HepG2 (cell line): ENCODE measurements at regions of chr2 and their contacts with region 1.

Region 1: DNA sequence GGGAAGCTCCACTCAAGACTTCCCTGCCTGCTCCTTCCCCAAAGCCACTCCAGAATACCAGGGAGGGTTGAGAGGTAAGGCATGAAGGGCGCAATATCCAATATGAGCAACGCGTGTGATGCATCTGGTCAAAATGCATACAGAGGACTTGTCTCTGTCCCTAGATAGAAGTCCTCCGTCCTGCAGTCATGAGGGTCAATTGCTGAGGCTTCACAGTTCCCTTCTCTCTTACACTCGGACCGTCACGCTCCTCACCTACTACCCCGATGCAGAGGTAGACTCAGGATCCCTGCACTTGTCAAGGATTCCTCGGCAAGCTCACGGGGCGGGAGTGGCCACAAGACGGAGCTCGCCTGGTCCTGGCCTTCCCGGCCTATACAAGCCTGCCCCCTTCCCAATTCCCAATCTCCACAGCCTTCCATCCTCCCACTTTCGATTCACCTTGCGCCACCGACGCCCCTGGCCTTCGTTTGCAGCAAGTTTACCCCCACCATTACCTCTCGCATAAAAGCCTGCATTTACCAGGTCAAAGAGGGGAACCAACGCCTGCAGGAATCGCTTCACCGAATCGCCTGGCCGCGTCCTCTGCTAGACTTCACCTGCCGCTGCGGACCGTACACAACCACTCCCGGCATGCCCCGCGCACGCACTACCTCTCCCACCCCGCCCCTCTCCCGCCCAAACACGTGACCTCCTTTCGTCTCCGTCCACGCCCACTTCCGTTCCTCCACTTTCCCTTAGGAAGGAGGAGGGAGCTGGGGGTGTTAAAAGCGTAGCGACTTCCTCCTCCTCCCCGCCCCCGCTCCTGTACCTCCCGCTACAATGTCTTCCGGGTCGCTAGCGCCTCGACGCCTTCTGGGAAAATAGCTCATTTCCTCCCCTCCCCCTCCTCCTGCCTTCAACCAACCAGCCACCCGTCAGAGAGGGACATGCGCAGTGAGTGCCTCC is at the start of gene ORC4:
- DNase-seq: peak; percentile 100
- ATAC-seq: peak; percentile 89
- H3K4me3 ChIP-seq: peak within 1 kb of the TSS; percentile 88 to 97 (median 93)
- H3K27ac ChIP-seq: peak within 1 kb of the TSS; percentile 82
- H3K4me1 ChIP-seq: peaks cover 57% of the 10 kb centered on the region
- H3K27me3 ChIP-seq: peaks cover 0 to 6% of the 10 kb centered on the region in 2 experiments; a peak in 1 of 5 replicates
- CTCF ChIP-seq: peak; percentile 89
- EP300 ChIP-seq: peak in 1 of 2 experiments; percentile 64; a peak in 1 of 4 replicates
- POLR2A ChIP-seq: peak; percentile 94 to 99
- RAD21 ChIP-seq: peak; percentile 79; the same call in 1 of the 2 replicates
- total RNA-seq, gene ORC4: 84.8 and 135 TPM in 2 replicates

Region 2: DNA sequence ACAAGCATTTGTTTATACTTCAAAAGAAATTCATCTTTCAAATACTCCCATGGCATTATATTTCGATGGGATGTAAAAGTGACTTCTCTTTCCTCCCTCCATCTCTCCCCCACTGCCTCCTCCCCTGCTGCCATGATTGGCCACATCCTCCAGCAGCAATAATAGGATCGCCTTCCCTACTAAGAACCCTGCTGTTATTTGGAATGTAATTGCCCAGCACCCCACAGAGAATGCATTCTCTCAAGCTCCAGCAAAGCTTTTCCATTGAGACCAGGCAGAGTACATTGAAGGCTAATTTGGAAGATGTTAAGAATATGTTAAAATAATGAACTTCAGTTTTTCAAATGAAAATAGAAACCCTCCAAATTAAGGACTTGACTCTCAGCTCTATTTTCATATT is 550.9 kb before region 1 on chr2:
- CTCF ChIA-PET with region 1: no interaction called
- POLR2A ChIA-PET with region 1: no interaction called
- in situ Hi-C with region 1: no loop called
- intact Hi-C with region 1: no loop called
- DNase-seq: no peak
- ATAC-seq: no peak
- H3K4me3 ChIP-seq: no peak overlapping the region
- H3K27ac ChIP-seq: no peak overlapping the region
- H3K4me1 ChIP-seq: 0 out of 2 replicates have a peak, but pooled peaks cover 8% of the 10 kb centered on the region
- H3K27me3 ChIP-seq: no peaks in the 10 kb centered on the region
- CTCF ChIP-seq: no peak
- EP300 ChIP-seq: no peak
- POLR2A ChIP-seq: no peak
- RAD21 ChIP-seq: no peak

Region 3: DNA sequence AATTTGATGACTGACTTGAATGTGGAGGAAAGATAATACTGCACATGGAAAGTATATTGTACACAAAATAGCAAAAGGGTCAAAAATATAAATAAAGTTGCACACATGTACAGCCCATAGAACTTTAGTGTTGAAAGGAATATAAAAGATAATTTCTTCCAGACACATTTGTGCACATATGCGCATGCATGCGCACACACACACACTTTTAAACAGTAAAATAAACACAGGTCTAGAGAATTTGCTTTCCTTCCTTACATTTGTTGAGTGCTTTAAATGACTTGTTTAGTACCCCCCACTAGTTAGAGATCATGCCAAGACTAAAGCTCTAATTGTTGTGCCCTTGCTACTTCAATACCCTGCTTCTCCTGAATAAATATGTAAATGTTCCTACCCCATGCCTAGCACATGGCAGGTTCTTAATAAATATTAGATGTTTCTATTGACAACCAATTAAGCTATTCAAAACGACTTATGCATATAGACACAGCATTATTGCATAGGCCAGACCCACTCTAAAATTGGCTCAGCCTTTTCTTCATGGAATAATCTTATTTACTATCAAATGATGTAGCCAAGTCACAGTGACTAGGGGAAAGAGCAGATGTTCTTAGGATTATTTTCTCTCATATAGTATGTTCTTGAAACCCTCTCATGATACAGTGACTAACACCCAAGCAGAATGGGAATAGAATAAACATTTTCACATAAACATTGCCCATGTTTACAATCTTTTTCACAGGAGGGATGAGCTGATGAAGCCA is 341.0 kb before region 1 on chr2:
- CTCF ChIA-PET with region 1: no interaction called
- POLR2A ChIA-PET with region 1: no interaction called
- in situ Hi-C with region 1: no loop called
- intact Hi-C with region 1: no loop called
- DNase-seq: no peak
- ATAC-seq: no peak
- H3K4me3 ChIP-seq: no peak overlapping the region
- H3K27ac ChIP-seq: no peak overlapping the region
- H3K4me1 ChIP-seq: no peaks in the 10 kb centered on the region
- H3K27me3 ChIP-seq: no peaks in the 10 kb centered on the region; a peak in 1 of 5 replicates
- CTCF ChIP-seq: no peak
- EP300 ChIP-seq: no peak
- POLR2A ChIP-seq: no peak
- RAD21 ChIP-seq: no peak

Region 4: DNA sequence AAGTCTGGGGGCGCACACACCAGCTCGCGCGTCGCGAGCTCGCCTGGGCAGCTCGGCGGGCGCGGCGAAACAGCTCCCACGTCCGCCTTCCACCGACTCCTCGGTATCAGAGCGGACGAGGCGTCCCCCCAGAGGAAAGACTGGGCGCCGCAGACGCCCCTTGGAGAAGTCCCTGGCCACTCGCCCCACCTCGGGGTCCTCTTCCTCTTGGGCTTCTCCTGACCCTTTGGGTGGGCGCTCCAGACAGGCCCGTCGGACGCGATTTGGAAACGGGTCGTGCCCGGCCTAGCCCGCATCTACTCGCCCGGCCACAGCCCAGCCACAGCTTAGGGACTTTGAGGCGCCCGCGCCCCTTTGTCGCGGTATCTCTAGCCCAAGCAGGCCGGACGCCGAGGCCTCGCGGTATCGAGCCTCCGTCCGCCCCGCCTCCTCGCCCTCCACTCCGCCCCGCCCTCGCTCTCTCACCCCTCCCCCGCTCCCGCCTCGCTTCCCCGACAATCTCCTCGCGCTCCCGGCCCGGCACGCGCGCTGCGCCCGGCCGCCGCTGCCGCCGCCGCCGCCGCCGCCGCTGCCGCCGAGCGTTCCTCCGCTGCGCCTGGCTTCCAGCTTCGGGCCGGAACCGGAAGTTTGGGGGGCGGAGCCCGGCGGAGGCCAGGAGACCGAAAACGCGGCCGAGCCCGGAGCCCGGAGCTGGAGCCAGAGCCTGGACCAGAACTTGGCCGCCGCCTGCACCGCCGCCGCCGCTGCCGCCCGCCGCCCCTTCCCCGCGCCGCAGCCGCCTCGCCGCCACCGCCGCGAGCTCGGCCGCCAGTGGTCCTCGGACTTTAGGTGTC is 176.3 kb before region 1 on chr2:
- CTCF ChIA-PET with region 1: no interaction called
- POLR2A ChIA-PET with region 1: interaction called, 12 read pairs
- in situ Hi-C with region 1: no loop called
- intact Hi-C with region 1: loop called (anchors 1 kb)
- DNase-seq: peak; percentile 82
- ATAC-seq: peak; percentile 95
- H3K4me3 ChIP-seq: peak overlapping the region; percentile 88 to 97 (median 94)
- H3K27ac ChIP-seq: peak overlapping the region; percentile 95
- H3K4me1 ChIP-seq: peaks cover 33% of the 10 kb centered on the region
- H3K27me3 ChIP-seq: peaks cover 0 to 5% of the 10 kb centered on the region in 2 experiments; a peak in 2 of 5 replicates
- CTCF ChIP-seq: peak; percentile 56
- EP300 ChIP-seq: peak in 1 of 2 experiments; percentile 4; a peak in 1 of 4 replicates
- POLR2A ChIP-seq: peak; percentile 65 to 86; a peak in 3 of 4 replicates
- RAD21 ChIP-seq: peak; percentile 75

Region 5: GRCh38 chr2:147910990-147911473 is 109.4 kb before region 1 on chr2:
- CTCF ChIA-PET with region 1: no interaction called
- POLR2A ChIA-PET with region 1: no interaction called
- in situ Hi-C with region 1: no loop called
- intact Hi-C with region 1: no loop called
- DNase-seq: peak; percentile 54
- ATAC-seq: peak; percentile 55
- H3K4me3 ChIP-seq: no peak overlapping the region
- H3K27ac ChIP-seq: no peak overlapping the region
- H3K4me1 ChIP-seq: no peaks in the 10 kb centered on the region
- H3K27me3 ChIP-seq: no peaks in the 10 kb centered on the region
- CTCF ChIP-seq: peak; percentile 73
- EP300 ChIP-seq: no peak
- POLR2A ChIP-seq: no peak
- RAD21 ChIP-seq: peak; percentile 74

Region 6: GRCh38 chr2:148006249-148007007 is 14.0 kb before region 1 on chr2:
- CTCF ChIA-PET with region 1: no interaction called
- POLR2A ChIA-PET with region 1: interaction called, 12 read pairs
- in situ Hi-C with region 1: no loop called
- intact Hi-C with region 1: no loop called
- DNase-seq: no peak
- ATAC-seq: peak; percentile 87
- H3K4me3 ChIP-seq: no peak overlapping the region
- H3K27ac ChIP-seq: no peak overlapping the region
- H3K4me1 ChIP-seq: peaks cover 14% of the 10 kb centered on the region
- H3K27me3 ChIP-seq: no peaks in the 10 kb centered on the region
- CTCF ChIP-seq: no peak
- EP300 ChIP-seq: no peak
- POLR2A ChIP-seq: no peak
- RAD21 ChIP-seq: no peak

Region 7: GRCh38 chr2:148209603-148210002 is 189.2 kb after region 1 on chr2:
- CTCF ChIA-PET with region 1: no interaction called
- POLR2A ChIA-PET with region 1: no interaction called
- in situ Hi-C with region 1: no loop called
- intact Hi-C with region 1: loop called (anchors 2 kb)
- DNase-seq: peak; percentile 48
- ATAC-seq: peak; percentile 82
- H3K4me3 ChIP-seq: no peak overlapping the region
- H3K27ac ChIP-seq: no peak overlapping the region
- H3K4me1 ChIP-seq: peaks cover 19% of the 10 kb centered on the region
- H3K27me3 ChIP-seq: no peaks in the 10 kb centered on the region
- CTCF ChIP-seq: peak; percentile 31; the same call in 1 of the 2 replicates
- EP300 ChIP-seq: no peak
- POLR2A ChIP-seq: no peak
- RAD21 ChIP-seq: no peak

Region 8: GRCh38 chr2:148644883-148645538 is 624.6 kb after region 1 on chr2:
- CTCF ChIA-PET with region 1: no interaction called
- POLR2A ChIA-PET with region 1: interaction called, 13 read pairs
- in situ Hi-C with region 1: no loop called
- intact Hi-C with region 1: loop called (anchors 2 kb)
- DNase-seq: peak; percentile 91
- ATAC-seq: peak; percentile 74
- H3K4me3 ChIP-seq: peak overlapping the region; percentile 91 to 94 (median 93)
- H3K27ac ChIP-seq: peak overlapping the region; percentile 91
- H3K4me1 ChIP-seq: peaks cover 46% of the 10 kb centered on the region
- H3K27me3 ChIP-seq: peaks cover 0 to 6% of the 10 kb centered on the region in 2 experiments; a peak in 3 of 5 replicates
- CTCF ChIP-seq: peak; percentile 67
- EP300 ChIP-seq: no peak
- POLR2A ChIP-seq: peak; percentile 64 to 87
- RAD21 ChIP-seq: no peak; the same call in 1 of the 2 replicates